ENCODE measurements at regions of chr22 and their contacts with region 1.

Region 1: DNA sequence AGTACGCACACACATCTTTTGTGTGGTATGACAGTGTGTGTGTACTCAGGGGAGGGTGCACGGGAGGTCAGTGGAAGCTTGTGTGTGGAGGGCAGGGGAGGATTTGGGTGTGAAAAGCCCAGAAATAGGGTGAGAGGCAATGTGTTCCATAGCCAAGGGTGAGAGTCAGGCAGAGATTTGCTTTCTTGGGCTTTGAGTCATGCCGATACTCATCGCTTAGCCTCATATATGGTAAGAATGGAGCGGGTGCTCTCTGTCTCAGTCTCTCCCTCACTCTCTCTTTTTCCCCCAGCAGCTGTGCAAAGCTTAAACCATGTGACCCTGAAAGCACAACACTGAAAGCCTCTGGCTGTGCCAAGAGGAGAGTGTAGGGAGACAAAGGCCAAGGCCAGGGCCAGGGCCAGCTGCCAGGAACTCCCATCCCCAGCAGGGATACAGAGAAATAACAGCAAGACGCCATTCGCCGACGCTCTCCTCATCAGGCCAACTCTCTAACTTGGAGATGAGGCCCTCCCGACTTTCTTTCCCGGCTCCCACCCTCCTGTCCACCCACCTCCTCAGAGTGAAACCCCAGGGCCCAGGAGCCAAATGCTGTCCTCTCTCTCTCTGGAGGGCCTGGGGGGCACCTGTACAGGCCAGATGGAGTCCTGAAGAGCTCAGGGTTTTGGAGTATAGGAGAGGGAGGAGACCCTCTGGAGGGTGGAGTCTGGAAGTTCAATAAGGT is 20.3 kb upstream of the MICAL3 start:
- DNase-seq: peak in 9 of 10 donors; percentile 89 to 97 (median 91)
- H3K4me3 ChIP-seq: peak overlapping the region in 22 of 59 donors; percentile 2 to 46 (median 18)
- H3K27ac ChIP-seq: peak overlapping the region; percentile 79 to 100 (median 98)
- H3K27me3 ChIP-seq: no peaks in the 10 kb centered on the region
- CTCF ChIP-seq: peak in 13 of 56 donors; percentile 6 to 29 (median 17)

Region 2: GRCh38 chr22:17952273-17952801 is 92.4 kb before region 1 on chr22:
- intact Hi-C with region 1: no loop called
- DNase-seq: peak in 1 of 10 donors; percentile 57
- H3K4me3 ChIP-seq: no peak overlapping the region
- H3K27ac ChIP-seq: peak overlapping the region in 19 of 59 donors; percentile 1 to 66 (median 35)
- H3K27me3 ChIP-seq: no peaks in the 10 kb centered on the region
- CTCF ChIP-seq: no peak

Region 3: GRCh38 chr22:17972385-17973181 is 72.1 kb before region 1 on chr22:
- intact Hi-C with region 1: no loop called
- DNase-seq: no peak
- H3K4me3 ChIP-seq: no peak overlapping the region
- H3K27ac ChIP-seq: peak overlapping the region in 11 of 59 donors; percentile 1 to 67 (median 27)
- H3K27me3 ChIP-seq: no peaks in the 10 kb centered on the region
- CTCF ChIP-seq: no peak

Region 4: DNA sequence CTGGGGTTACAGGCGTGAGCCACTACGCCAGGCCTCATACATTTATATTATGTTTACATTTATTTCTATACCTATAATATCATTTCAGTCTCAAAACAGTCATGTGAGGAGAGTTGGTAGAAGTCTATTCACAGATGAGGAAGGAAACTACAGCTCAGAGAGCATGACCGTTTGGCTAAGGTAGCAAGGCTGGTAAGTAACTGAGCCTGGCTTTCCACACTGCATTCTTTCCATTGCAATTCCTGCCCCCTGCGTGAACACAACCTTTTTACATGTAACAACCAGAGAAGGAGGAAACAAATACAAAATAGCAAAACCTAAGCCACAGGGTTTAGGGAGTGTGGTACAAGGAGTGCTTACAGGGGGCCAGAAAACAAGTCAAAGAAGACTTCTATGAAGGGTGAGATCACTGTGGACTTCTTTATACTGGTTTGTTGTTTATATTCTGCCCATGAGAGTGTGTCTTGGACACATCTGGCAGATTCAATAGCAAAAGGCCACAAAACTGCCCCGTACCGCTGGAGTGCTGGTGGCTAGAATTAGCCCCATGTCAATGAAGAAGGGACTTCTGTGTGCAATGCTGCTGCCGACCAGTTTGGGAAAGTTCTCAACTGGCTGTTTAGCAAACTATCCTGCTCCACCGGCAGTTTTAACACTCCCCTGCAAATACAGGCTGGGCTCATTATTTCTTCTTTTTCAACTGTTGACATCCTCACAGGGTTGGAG is 39.3 kb before region 1 on chr22:
- intact Hi-C with region 1: no loop called
- DNase-seq: peak in 2 of 10 donors; percentile 38 to 45
- H3K4me3 ChIP-seq: peak overlapping the region in 5 of 59 donors; percentile 6 to 23 (median 9)
- H3K27ac ChIP-seq: peak overlapping the region in 57 of 59 donors; percentile 6 to 98 (median 69)
- H3K27me3 ChIP-seq: no peaks in the 10 kb centered on the region
- CTCF ChIP-seq: peak in 1 of 56 donors; percentile 14

Region 5: DNA sequence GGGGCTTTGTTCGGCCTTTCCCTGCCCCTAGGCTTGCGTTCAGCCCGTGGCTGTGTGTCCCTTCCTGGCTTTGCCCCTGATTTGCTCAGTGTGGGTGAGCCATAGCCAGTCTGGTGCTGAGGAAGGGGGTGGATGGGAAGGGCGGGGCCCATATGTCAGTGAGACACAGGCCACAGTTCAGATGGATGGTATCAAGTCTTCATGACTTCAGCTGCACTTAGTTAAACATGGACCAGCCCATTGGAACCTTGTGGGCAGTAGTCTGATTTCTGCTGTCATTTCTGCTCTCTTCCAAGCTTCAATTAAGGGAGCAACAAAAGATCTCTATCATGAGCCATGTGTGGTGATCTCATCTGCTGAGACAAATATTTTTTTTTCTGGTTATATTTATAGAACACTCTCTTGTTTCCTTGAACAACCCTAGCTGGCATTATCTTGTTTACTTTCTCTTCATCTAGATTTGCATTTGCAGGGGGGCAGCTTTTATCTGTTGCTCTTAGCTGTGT is 11.5 kb after region 1 on chr22:
- intact Hi-C with region 1: loop called in 1 of 2 experiments (anchors 1 kb)
- DNase-seq: peak; percentile 30 to 83 (median 70)
- H3K4me3 ChIP-seq: peak overlapping the region in 4 of 59 donors; percentile 7 to 24 (median 12)
- H3K27ac ChIP-seq: peak overlapping the region; percentile 82 to 99 (median 96)
- H3K27me3 ChIP-seq: no peaks in the 10 kb centered on the region
- CTCF ChIP-seq: peak in 1 of 56 donors; percentile 12